ENCODE measurements at regions of chr4 and their contacts with region 1.

Region 1: GRCh38 chr4:26410385-26411293 is 79.6 kb downstream of the CCKAR start:
- DNase-seq: peak; percentile 32
- ATAC-seq: no peak
- H3K4me3 ChIP-seq: no peak overlapping the region
- H3K27ac ChIP-seq: no peak overlapping the region
- H3K4me1 ChIP-seq: no peaks in the 10 kb centered on the region
- H3K27me3 ChIP-seq: no peaks in the 10 kb centered on the region
- CTCF ChIP-seq: peak; percentile 54; the same call in 1 of the 2 replicates

Region 2: GRCh38 chr4:25981749-25982148 is 428.9 kb before region 1 on chr4:
- CTCF ChIA-PET with region 1: no interaction called
- POLR2A ChIA-PET with region 1: no interaction called
- in situ Hi-C with region 1: no loop called
- intact Hi-C with region 1: loop called (anchors 10 kb)
- DNase-seq: no peak
- ATAC-seq: no peak
- H3K4me3 ChIP-seq: no peak overlapping the region
- H3K27ac ChIP-seq: no peak overlapping the region
- H3K4me1 ChIP-seq: no peaks in the 10 kb centered on the region
- H3K27me3 ChIP-seq: no peaks in the 10 kb centered on the region
- CTCF ChIP-seq: no peak

Region 3: GRCh38 chr4:26061248-26061986 is 349.2 kb before region 1 on chr4:
- CTCF ChIA-PET with region 1: no interaction called
- POLR2A ChIA-PET with region 1: no interaction called
- in situ Hi-C with region 1: no loop called
- intact Hi-C with region 1: loop called (anchors 10 kb)
- DNase-seq: peak; percentile 28
- ATAC-seq: peak; percentile 96
- H3K4me3 ChIP-seq: no peak overlapping the region
- H3K27ac ChIP-seq: no peak overlapping the region
- H3K4me1 ChIP-seq: no peaks in the 10 kb centered on the region
- H3K27me3 ChIP-seq: no peaks in the 10 kb centered on the region
- CTCF ChIP-seq: peak; percentile 77

Region 4: GRCh38 chr4:26192899-26193778 is 217.5 kb before region 1 on chr4:
- CTCF ChIA-PET with region 1: no interaction called
- POLR2A ChIA-PET with region 1: no interaction called
- in situ Hi-C with region 1: no loop called
- intact Hi-C with region 1: no loop called
- DNase-seq: no peak
- ATAC-seq: no peak
- H3K4me3 ChIP-seq: no peak overlapping the region
- H3K27ac ChIP-seq: no peak overlapping the region
- H3K4me1 ChIP-seq: peaks cover 8% of the 10 kb centered on the region
- H3K27me3 ChIP-seq: no peaks in the 10 kb centered on the region
- CTCF ChIP-seq: 0 out of 2 replicates have a peak, but pooled peaks have one; percentile 3

Region 5: DNA sequence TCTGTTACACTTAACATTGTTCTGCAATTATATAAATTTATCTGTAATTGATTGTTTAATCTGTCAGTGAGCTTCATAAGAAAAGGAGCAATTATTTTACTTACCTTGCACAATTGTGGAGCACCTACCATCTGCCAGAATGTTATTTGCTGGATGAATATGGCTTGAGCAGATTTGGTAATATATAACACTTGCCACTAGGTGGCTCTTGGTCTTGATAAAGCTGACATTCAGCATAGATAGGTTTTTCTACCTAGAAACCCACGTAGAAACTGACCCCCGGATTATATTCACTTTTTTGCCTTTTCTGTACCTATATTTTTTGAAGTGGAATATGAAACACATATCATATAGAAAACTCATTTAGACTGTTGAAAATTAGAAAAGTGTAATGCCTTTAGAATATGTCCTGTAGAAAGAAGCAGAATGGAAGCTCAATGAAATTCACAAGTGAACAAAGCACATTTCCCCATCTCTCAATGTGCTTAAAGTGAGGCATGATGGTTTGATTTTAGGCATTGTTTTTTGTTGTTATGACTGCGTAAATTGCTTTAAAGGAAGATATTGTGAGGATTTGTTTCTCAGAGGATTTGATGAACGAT is 80.4 kb before region 1 on chr4:
- CTCF ChIA-PET with region 1: interaction called, 19 read pairs
- POLR2A ChIA-PET with region 1: interaction called, 6 read pairs
- in situ Hi-C with region 1: no loop called
- intact Hi-C with region 1: loop called (anchors 1 kb)
- DNase-seq: no peak
- ATAC-seq: peak; percentile 91
- H3K4me3 ChIP-seq: no peak overlapping the region
- H3K27ac ChIP-seq: no peak overlapping the region
- H3K4me1 ChIP-seq: peaks cover 4% of the 10 kb centered on the region; the same call in 1 of the 2 replicates
- H3K27me3 ChIP-seq: no peaks in the 10 kb centered on the region
- CTCF ChIP-seq: peak; percentile 66; the same call in 1 of the 2 replicates